ENCODE measurements at regions of chr1 and their contacts with region 1.

Region 1: GRCh38 chr1:44002606-44003157 is 11.3 kb downstream of the CCDC24 start:
- DNase-seq: peak in 1 of 2 donors; percentile 65
- ATAC-seq: no peak
- H3K4me3 ChIP-seq: no peak overlapping the region
- H3K27ac ChIP-seq: no peak overlapping the region
- H3K4me1 ChIP-seq: no peaks in the 10 kb centered on the region
- H3K27me3 ChIP-seq: no peaks in the 10 kb centered on the region

Region 2: DNA sequence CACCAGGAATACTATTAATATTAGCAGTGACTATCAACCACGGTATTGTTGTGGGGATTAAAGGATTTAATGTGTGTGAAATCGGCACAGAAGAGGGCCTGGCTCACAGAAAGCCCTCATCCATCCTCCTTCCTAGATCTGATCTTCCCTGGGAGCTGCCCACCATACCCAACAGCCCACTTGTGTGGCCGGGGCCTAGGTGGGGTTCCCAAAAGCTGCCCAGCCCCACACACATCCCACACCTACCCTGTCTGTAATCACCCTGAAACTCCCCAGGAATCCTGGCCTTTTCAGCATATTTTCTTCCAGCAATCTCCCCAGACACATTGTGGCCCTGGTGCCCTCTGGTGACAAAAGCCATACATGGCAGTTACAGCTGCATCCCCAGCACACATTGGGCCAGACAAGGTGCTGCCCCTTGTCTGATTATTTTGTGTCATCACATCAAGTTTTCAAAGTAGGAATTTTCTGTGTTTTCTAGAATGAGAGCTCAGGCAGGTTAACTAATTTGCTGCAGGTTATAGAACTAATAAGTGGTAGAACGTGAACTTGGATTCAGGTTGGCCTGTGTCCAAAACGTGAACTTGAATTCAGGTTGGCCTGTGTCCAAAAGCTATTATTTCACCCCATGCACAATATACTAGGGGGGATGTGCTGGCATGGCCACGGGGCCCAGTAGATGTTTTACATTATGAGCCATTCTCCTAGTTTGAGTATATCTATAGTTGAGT is 33.9 kb after region 1 on chr1:
- intact Hi-C with region 1: loop called (anchors 1 to 2 kb)
- DNase-seq: peak; percentile 82 to 87
- ATAC-seq: peak; percentile 79
- H3K4me3 ChIP-seq: no peak overlapping the region
- H3K27ac ChIP-seq: peak overlapping the region; percentile 44 to 46
- H3K4me1 ChIP-seq: no peaks in the 10 kb centered on the region
- H3K27me3 ChIP-seq: no peaks in the 10 kb centered on the region

Measured in aorta (tissue), 5 donors.